BJ (cell line): ENCODE measurements at regions of chr11 and their contacts with region 1.

Region 1: DNA sequence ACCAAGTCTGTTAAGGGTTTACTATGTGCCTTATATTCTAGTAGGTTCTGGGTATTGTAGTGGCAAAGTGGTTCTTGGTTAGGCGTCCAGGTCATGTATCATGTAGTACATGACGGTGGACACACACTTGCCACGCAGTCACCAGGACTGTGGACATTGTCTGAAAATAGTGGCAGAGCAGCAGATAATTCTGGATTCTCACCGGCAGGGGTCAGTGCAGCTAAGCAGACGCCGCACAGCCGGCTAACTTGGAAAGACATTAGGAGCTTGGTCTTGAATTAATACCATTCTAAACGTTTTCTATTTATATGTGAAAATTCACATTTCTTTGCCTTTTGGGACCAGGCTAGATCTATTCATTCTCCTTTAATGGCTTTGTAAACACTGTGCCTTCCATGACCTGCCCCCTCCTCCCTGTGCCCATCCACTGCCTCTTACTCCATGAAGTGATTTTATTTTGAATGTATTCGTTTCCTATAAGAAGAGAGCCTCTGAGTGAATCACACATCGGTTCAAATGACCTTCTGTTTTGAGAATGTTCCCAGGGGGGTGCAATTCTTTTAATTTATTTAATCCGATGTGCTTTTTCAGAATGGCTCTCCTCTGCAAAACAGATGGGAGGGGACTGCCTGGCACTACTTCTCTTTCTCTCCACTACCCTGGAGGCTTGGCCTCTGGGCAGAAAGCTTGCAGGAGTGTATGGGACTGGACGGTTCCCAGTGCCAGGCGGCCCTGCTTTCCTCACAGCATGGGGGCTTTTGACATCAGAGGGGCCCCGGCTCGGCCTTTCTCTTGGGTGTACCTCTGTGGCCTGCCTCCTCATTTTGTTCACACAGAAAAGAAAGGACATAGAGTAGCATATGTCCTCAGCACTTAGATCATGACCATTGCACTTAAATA is 378.0 kb downstream of the NTM start:
- DNase-seq: no peak
- H3K4me3 ChIP-seq: no peak overlapping the region
- H3K27me3 ChIP-seq: no peaks in the 10 kb centered on the region
- CTCF ChIP-seq: peak; percentile 89

Region 2: DNA sequence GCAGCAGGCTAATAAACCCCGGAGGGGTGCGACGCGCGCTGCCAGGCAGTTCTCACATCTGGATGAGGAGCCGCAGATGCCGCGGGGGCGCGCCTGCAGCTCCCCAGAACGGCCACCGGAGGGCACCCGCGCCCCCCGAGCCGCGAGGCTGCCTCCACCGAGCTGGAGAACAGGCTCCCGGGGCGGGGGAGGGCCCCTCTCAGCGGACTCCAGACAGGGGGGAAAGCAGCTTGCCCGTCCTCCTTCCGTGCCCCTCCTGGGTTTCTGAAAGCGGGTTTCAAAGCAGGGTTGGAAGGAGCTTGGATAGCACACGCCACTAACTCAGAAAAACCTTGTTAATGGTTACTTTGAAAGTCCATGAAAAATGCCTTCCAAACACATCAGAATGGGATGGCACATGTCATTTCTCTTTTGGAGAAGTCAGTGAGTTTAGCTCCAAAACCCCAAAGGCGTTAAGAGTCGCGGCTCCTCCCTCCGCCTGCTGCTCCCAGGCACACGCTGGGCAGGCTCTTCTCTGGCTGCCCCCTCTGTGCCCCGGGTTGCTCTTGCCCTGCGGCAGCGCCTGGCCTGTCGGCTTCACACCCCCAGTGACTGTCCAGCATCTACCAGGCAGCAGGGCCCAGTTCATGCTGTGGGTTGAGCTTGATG is 60.2 kb before region 1 on chr11:
- CTCF ChIA-PET with region 1: interaction called, 12 read pairs
- POLR2A ChIA-PET with region 1: no interaction called
- DNase-seq: no peak
- H3K4me3 ChIP-seq: peak overlapping the region; percentile 25
- H3K27me3 ChIP-seq: peaks cover 8% of the 10 kb centered on the region; the same call in 1 of the 2 replicates
- CTCF ChIP-seq: peak; percentile 84

Region 3: DNA sequence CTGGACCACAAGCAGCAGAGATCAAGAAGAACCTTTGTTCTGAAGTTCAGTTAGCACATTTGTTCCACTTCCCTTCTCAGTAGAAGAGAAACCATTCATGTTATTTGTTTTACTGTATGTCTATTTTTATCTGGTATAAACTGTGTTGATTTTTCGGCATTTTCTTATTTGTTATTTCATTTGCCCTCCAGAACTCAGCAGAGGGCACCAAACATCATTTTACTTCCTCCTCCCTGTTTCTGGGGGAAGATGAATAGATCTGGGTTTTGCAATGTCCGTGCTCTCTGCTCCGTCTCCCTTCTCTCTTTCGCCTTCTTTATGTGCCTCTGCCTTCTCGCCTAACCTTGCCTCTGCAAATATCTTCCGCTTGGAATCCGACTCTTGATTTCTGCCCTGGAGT is 11.0 kb before region 1 on chr11:
- CTCF ChIA-PET with region 1: interaction called, 29 read pairs
- POLR2A ChIA-PET with region 1: no interaction called
- DNase-seq: no peak
- H3K4me3 ChIP-seq: no peak overlapping the region
- H3K27me3 ChIP-seq: no peaks in the 10 kb centered on the region
- CTCF ChIP-seq: 0 out of 2 replicates have a peak, but pooled peaks have one; percentile 15

Region 4: DNA sequence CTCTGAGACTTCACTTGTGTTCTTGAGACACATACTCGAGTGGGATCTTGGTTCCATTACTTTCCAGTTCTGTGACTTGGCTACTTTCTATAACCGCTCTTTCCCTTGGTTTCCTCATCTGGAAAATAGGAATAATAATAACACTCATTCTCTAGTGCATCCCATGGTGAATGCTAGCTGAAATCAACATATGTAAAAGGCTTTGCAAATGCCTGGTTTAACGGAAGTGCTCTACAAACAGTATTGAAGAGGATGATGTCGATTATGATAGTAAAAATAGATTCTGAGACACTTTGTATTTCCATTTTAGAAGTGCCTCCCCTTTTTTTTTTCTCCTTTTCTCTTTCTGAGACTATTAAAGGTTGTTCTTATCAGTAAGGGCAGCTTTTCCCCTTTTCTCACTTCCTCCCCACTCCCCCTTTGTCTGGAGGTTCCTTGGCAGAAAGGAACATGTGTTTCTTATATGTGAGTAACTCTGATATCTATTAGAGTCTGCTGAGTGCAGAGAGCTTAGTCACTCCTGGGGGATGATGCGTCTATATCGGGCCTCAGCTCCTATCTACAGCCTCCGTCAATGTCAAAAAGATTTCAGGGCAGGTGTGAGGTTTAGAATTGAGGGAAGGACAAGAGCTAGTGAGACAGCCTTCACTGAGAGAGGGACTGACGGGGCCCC is 111.3 kb after region 1 on chr11:
- CTCF ChIA-PET with region 1: interaction called, 17 read pairs
- POLR2A ChIA-PET with region 1: no interaction called
- DNase-seq: peak; percentile 4
- H3K4me3 ChIP-seq: no peak overlapping the region
- H3K27me3 ChIP-seq: no peaks in the 10 kb centered on the region; the same call in 1 of the 2 replicates
- CTCF ChIP-seq: no peak

Region 5: GRCh38 chr11:131910523-131911387 is 162.4 kb after region 1 on chr11:
- CTCF ChIA-PET with region 1: interaction called, 46 read pairs
- POLR2A ChIA-PET with region 1: no interaction called
- DNase-seq: no peak
- H3K4me3 ChIP-seq: peak overlapping the region; percentile 76
- H3K27me3 ChIP-seq: no peaks in the 10 kb centered on the region
- CTCF ChIP-seq: no peak

Region 6: GRCh38 chr11:133064152-133064877 is 1315.9 kb after region 1 on chr11:
- CTCF ChIA-PET with region 1: interaction called, 10 read pairs
- POLR2A ChIA-PET with region 1: no interaction called
- DNase-seq: no peak
- H3K4me3 ChIP-seq: peak overlapping the region; percentile 57
- H3K27me3 ChIP-seq: peaks cover 4% of the 10 kb centered on the region; the same call in 1 of the 2 replicates
- CTCF ChIP-seq: peak; percentile 79